Vagina (tissue), 2 donors: ENCODE measurements at regions of chr1 and their contacts with region 1.

Region 1: DNA sequence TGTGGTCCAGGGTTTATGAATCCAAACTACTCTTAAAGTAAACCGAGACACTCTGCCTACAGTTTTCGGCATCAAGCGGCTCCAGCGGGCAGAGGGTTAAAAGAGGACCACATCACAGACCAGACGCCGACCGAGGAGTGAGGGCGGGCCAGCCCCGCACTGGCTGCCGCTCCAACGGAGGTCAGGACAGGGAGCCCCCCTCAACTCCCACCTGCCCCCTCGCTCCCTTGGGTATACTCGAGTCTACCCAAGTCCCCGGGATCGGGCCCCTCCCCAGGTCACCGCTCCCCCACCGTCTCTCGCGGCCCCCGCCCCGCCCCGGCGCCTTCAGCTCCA is 312 bp downstream of the ARNT start:
- DNase-seq: no peak
- H3K4me3 ChIP-seq: peak overlapping the region; percentile 94 to 97
- H3K27ac ChIP-seq: peak overlapping the region; percentile 97
- H3K4me1 ChIP-seq: peaks cover 31% of the 10 kb centered on the region
- H3K27me3 ChIP-seq: no peaks in the 10 kb centered on the region
- CTCF ChIP-seq: no peak
- POLR2A ChIP-seq: no peak

Region 2: GRCh38 chr1:150778409-150778808 is 97.7 kb before region 1 on chr1:
- intact Hi-C with region 1: no loop called
- DNase-seq: no peak
- H3K4me3 ChIP-seq: no peak overlapping the region
- H3K27ac ChIP-seq: no peak overlapping the region
- H3K4me1 ChIP-seq: no peaks in the 10 kb centered on the region
- H3K27me3 ChIP-seq: no peaks in the 10 kb centered on the region
- CTCF ChIP-seq: no peak
- POLR2A ChIP-seq: no peak

Region 3: DNA sequence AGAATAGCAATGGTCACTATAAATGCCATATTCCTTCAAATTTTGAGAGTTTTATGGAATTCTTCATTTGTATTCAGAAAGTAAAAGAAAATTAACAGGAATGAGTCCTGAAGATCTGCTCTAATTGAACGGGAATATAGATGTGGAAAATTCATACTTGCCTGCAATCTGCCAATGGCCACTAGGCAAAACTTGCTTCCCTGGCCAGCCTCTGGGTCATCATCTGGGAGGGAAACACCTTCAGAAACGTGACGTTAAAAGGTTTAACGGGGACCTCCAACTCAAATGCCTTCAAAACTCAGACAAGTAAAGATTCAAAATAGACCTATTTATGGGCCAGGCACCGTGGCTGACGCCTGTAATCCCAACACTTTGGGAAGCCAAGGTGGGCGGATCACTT is 46.3 kb before region 1 on chr1:
- intact Hi-C with region 1: loop called (anchors 1 kb)
- DNase-seq: no peak
- H3K4me3 ChIP-seq: no peak overlapping the region
- H3K27ac ChIP-seq: no peak overlapping the region
- H3K4me1 ChIP-seq: no peaks in the 10 kb centered on the region
- H3K27me3 ChIP-seq: no peaks in the 10 kb centered on the region
- CTCF ChIP-seq: peak in 1 of 3 experiments; percentile 6
- POLR2A ChIP-seq: no peak

Region 4: GRCh38 chr1:150925816-150926741 is 50.0 kb after region 1 on chr1 and contains the start of gene SETDB1:
- intact Hi-C with region 1: loop called (anchors 10 kb)
- DNase-seq: peak in 1 of 2 donors; percentile 93
- H3K4me3 ChIP-seq: peak within 1 kb of the TSS; percentile 72 to 88
- H3K27ac ChIP-seq: peak within 1 kb of the TSS; percentile 79
- H3K4me1 ChIP-seq: peaks cover 12% of the 10 kb centered on the region
- H3K27me3 ChIP-seq: no peaks in the 10 kb centered on the region
- CTCF ChIP-seq: no peak
- POLR2A ChIP-seq: peak in 1 of 2 donors; percentile 32
- total RNA-seq, gene SETDB1: 51.1 TPM

Region 5: DNA sequence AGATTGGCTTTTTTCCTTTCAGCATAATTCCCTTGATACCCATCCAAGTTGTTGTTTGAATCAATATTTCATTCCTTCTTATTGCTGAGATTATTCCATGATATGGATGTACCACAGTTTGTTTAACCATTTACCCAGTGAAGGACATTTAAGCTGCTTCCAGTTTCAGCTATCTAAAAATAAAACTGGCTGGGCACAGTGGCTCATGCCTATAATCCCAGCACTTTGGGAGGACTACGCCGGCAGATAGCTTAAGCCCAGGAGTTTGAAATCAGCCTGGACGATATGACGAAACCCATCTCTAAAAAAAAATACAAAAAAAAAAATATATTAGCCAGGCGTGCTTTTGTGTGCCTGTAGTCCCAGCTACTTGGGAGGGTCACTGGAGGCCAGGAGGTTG is 237.8 kb after region 1 on chr1:
- intact Hi-C with region 1: no loop called
- DNase-seq: no peak
- H3K4me3 ChIP-seq: no peak overlapping the region
- H3K27ac ChIP-seq: no peak overlapping the region
- H3K4me1 ChIP-seq: no peaks in the 10 kb centered on the region
- H3K27me3 ChIP-seq: no peaks in the 10 kb centered on the region
- CTCF ChIP-seq: no peak
- POLR2A ChIP-seq: no peak